GM10248 (cell line): ENCODE measurements at regions of chr7 and their contacts with region 1.

Region 1: GRCh38 chr7:55526770-55527169 is 45.5 kb downstream of the VOPP1 start:
- DNase-seq: peak; percentile 49
- CTCF ChIP-seq: no peak

Region 2: DNA sequence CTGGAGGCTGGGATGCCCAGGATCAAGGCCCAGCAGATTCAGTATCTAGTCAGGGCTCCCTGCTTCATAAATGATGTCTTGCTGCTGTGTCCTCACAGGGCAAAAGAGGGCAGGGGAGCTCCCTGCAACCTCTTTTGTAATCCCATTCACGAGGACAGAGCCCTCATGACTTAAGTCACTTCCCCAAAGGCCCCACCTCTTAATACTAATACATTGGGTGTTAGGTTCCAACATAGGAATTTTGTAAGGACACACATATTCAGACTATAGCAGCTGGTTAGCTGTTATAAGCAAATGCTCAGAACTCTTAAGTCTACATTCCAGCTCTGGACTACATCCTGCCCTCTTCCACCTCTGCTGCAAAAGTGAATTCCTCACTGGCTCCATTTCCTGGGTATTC is 17.4 kb before region 1 on chr7:
- CTCF ChIA-PET with region 1: interaction called, 150 read pairs
- POLR2A ChIA-PET with region 1: interaction called, 26 read pairs
- DNase-seq: no peak
- CTCF ChIP-seq: no peak

Region 3: GRCh38 chr7:55515569-55516279 is 11.0 kb before region 1 on chr7:
- CTCF ChIA-PET with region 1: interaction called, 150 read pairs
- POLR2A ChIA-PET with region 1: interaction called, 51 read pairs
- DNase-seq: peak; percentile 64
- CTCF ChIP-seq: no peak